ENCODE measurements at regions of chr1 and their contacts with region 1.

Region 1: GRCh38 chr1:35451125-35451528 is 106.1 kb downstream of the KIAA0319L start:
- DNase-seq: peak; percentile 29 to 83
- H3K4me3 ChIP-seq: no peak overlapping the region
- H3K4me1 ChIP-seq: no peaks in the 10 kb centered on the region; the same call in 1 of the 2 replicates
- H3K27me3 ChIP-seq: no peaks in the 10 kb centered on the region

Region 2: DNA sequence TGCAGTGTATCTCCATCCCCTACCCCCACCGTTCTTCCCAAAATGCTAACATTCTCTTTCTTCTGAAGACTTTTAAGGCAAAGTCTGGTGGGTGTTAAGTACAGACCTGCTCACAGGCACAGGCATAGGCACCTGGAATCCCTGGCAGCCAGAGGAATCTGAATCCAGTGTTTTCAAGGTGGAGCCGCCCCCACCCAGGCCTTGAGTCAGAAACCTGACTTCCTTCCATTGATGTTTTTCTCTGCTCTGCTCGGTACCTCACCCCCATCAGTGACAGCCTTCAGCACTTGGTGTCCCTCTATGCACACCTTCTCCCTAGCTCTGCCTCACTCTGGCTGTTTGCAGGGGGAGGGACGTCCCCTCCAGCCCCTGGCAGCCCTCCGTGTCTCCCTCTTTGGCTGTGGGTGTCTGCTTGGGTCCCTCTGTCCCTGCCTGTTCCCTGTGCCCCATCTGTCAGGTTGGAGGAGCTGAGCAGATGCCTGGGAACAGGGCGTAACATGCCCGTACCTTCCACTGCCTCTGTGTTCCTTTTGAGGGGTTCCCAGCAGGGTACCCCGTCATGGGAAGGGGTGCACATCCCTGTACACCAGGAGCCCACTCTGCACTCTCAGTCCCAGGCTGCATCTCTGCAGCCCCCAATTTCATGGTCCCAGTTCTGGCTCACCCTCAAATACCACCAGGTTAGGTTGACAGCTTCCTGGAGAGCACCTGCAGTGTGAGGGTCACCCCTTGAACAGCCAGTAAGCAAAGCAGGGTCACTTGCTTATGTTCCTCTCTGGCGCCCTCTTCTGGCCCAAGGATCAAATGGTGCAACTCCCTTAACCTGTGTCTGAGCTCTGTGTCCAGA is 113.1 kb after region 1 on chr1:
- in situ Hi-C with region 1: loop called (anchors 5 kb)
- DNase-seq: peak; percentile 40 to 91
- H3K4me3 ChIP-seq: no peak overlapping the region
- H3K4me1 ChIP-seq: no peaks in the 10 kb centered on the region
- H3K27me3 ChIP-seq: no peaks in the 10 kb centered on the region

Region 3: GRCh38 chr1:35726450-35727433 is 275.6 kb after region 1 on chr1:
- in situ Hi-C with region 1: loop called (anchors 10 kb)
- DNase-seq: peak; percentile 70 to 74
- H3K4me3 ChIP-seq: no peak overlapping the region
- H3K4me1 ChIP-seq: no peaks in the 10 kb centered on the region
- H3K27me3 ChIP-seq: no peaks in the 10 kb centered on the region

Measured in HAP-1 (cell line).